Cardiac septum (tissue), 1 donor: ENCODE measurements at regions of chr11 and their contacts with region 1.

Region 1: DNA sequence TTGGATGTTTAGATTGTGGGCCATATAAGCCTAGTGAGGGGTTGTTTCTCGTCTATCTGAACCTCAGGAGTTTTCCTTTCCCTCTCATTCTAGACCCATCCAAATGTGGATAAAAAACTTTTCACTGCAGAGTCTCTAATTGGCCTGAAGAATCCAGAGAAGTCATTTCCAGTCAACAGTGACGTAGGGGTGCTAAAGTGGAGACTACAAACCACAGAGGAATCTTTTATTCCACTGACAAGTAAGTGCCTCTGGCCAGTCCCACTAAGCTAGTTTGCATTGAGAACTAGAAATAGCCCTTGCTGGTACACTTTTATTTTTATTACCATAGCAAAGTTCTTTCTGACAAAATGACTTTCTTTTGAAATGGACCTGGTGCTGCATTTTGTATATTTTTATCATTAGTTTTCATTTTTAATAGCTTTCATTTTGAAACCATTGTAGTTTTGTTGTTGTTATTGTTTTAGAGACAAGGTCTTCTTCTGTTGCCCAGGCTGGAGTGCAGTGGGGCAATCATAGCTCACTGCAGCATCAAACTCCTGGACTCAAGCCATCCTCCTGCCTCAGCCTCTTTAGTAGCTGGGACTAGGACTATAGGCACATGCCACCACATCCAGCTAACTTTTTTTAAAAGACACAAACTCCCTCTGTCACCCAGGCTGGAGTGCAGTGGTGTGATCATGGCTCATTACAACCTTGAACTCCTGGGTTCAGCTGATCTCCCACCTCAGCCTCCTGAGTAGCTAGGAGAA is 14.6 kb upstream of the PHLDB1 start:
- DNase-seq: no peak

Region 2: GRCh38 chr11:118448294-118448693 is 144.5 kb before region 1 on chr11:
- intact Hi-C with region 1: no loop called
- DNase-seq: no peak

Region 3: DNA sequence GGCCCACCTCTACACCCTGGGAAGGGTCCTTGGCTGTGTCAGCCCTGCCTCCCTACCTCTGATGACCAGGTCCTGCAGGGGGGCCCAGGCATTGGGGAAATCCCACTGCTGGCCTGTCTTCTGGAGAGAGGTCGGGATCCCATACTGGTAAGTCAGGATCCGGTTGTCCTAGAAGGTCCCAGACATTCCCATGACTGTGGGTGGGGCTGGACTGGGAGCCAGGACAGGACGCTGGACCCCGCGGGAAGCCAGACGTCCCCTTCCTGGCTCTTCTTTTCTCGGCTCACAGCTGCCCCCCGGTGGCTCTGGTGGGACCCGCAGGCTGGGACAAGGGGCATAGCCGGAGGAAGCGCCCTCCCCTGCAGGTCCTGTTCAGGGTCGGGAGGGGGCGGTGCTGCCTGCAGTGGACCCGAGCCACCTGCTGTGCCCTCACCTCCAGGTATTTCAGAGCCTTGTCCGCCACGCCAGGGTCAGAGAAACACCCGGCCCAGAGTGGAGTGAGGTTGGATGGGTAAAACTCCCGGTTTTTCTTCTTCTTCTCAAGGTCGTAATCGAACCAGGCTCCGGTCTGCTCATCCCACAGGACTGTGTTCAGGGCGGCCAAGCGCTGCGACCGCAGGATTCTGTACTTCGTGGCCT is 66.6 kb after region 1 on chr11:
- intact Hi-C with region 1: loop called (anchors 2 kb)
- DNase-seq: peak; percentile 92

Region 4: DNA sequence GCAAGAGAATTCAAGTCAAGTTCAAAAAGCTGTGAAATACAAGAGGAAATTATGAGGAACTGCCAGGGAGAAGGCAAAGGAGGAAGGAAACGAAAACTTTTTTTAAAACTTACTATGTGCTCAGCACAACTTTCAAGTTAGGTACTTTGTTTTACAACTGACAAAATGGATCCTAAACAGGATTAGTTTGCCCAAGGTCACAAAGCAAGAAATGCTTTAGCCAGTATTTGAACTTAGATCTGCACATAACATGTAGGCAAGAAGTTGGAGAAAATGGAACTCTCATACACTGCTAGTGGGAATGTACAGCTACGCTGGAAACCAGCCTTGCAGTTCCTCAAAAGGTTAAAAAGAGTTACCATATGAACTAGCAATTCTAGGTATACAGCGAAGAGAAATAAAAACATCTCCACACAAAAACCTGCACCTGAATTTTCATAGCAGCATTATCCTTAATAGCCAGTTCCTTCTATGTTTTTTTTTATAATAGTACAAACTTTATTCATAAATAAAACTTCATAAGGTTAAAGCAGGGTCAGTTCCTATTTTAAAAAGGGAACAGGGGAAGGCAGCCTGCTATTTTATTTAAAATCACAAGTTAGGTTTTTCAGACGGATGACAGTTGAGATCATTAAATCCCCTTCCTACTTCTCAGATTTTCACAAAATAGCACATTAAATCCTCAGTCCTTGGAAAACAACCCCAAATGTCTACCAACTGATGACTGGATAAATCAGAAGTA is 178.9 kb after region 1 on chr11:
- intact Hi-C with region 1: no loop called
- DNase-seq: no peak